Activated CD8-positive, alpha-beta T cell treated with anti-CD3 and anti-CD28 coated beads for 36 hours (primary cell): ENCODE measurements at regions of chr12 and their contacts with region 1.

Region 1: DNA sequence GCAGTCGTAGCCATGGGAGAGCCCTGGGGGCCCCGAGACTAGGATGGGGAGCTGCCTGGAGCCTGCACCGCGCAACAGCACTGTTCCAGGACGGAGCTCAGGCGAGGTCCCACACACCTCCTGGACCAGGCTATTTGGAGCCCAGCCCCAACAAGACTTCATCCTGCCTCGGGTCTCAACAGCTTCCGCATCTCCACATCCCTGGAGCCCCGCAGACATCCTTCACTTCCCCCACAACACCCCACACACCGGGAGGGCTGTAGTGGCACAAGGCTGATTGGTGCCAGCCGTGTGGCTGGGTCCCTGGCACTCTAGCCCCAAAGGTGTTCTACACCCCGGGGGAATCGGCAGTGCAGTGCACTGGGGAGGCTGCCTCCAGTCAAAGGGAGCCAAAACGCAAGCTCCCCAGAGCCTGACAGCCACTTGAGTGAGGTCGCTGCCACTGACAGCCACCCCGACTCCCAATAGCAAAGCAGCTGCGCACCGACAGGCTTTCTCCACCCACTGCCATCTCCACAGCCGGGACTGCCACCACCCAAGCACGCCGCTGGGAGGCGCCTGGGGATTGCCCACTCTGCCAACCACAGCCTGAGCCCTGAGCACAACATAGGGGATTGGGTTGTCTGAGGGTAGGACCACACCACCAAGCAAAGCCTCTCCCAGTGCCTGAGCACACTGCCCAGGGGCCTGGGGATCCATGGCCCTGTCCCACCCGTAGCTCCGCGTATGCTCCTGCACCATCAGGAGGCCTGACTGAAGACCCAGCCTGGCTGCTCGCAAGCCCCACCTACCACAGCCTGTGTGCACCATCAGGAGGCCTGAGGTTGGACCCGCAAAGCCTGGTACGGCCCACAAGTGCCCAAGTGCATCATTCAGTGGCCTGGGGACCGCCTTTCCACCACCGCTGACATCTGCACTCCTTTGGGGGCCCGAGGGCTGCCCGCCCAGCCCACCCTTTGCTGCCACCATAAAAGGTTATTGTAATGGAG is 13.2 kb upstream of the KLRF1 start:
- DNase-seq: peak; percentile 94
- ATAC-seq: peak; percentile 98
- H3K4me3 Mint-ChIP-seq: peak overlapping the region; percentile 85
- H3K27ac Mint-ChIP-seq: peak overlapping the region; percentile 55
- H3K4me1 Mint-ChIP-seq: peaks cover 14% of the 10 kb centered on the region
- H3K27me3 Mint-ChIP-seq: peaks cover 4% of the 10 kb centered on the region
- CTCF ChIP-seq: peak; percentile 94

Region 2: DNA sequence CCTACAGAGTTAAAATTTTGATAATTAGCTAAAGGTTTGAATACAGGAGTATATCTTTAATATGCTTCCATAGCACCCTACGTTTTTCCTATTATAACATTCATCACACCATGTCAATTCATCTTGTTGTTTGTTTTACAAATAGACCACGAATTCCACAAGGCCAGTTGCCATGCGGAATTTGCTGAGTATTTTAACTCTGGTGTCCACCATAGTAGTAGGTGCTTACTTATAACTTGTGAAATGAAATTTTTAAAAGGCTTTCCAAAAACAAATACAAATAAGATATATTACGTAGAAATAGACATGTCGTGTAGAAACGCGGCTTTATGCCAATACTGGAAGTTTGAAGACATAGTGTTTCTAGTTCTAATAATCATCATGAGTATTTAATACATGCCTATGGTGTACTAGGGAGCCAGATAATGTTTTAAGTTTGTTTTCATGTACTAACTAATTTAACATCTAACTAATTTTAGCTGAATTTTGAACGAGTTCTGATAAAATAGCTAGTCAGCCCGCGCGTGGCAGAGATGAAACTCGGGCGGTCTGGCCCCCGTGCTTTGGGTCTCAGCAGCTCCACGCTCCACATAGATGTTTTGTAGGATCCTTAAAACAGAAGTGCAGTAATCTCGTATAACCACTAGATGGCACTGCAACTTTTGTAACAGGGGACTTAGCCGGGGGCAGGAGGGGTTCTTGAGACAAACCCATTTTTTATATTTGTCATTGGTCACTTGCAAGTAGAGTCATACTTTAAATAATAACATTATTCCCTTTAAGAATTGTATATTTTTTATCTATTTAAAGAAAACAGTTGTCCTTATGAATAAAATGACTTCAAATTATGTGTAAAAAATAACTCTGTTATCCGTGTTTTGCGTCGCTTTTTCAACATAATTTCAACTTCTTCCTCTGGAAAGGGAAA is 63.6 kb before region 1 on chr12:
- CTCF ChIA-PET with region 1: interaction called, 219 read pairs
- POLR2A ChIA-PET with region 1: interaction called, 7 read pairs
- intact Hi-C with region 1: no loop called
- DNase-seq: peak; percentile 73
- ATAC-seq: peak; percentile 66
- H3K4me3 Mint-ChIP-seq: peak overlapping the region; percentile 67
- H3K27ac Mint-ChIP-seq: peak overlapping the region; percentile 86
- H3K4me1 Mint-ChIP-seq: peaks cover 57% of the 10 kb centered on the region
- H3K27me3 Mint-ChIP-seq: no peaks in the 10 kb centered on the region
- CTCF ChIP-seq: peak; percentile 78

Region 3: GRCh38 chr12:9829990-9830389 is 15.9 kb after region 1 on chr12:
- CTCF ChIA-PET with region 1: interaction called, 21 read pairs
- POLR2A ChIA-PET with region 1: no interaction called
- intact Hi-C with region 1: no loop called
- DNase-seq: no peak
- ATAC-seq: no peak
- H3K4me3 Mint-ChIP-seq: no peak overlapping the region
- H3K27ac Mint-ChIP-seq: no peak overlapping the region
- H3K4me1 Mint-ChIP-seq: peaks cover 2% of the 10 kb centered on the region
- H3K27me3 Mint-ChIP-seq: no peaks in the 10 kb centered on the region
- CTCF ChIP-seq: no peak

Region 4: GRCh38 chr12:9869307-9870161 is 55.4 kb after region 1 on chr12 and contains the start of gene CLEC2B:
- CTCF ChIA-PET with region 1: interaction called, 20 read pairs
- POLR2A ChIA-PET with region 1: interaction called, 6 read pairs
- intact Hi-C with region 1: loop called (anchors 5 kb)
- DNase-seq: peak; percentile 70
- ATAC-seq: peak; percentile 68
- H3K4me3 Mint-ChIP-seq: peak within 1 kb of the TSS; percentile 85
- H3K27ac Mint-ChIP-seq: peak within 1 kb of the TSS; percentile 89
- H3K4me1 Mint-ChIP-seq: peaks cover 23% of the 10 kb centered on the region
- H3K27me3 Mint-ChIP-seq: no peaks in the 10 kb centered on the region
- CTCF ChIP-seq: no peak
- total RNA-seq, gene CLEC2B: 38.4 to 43.2 TPM

Region 5: DNA sequence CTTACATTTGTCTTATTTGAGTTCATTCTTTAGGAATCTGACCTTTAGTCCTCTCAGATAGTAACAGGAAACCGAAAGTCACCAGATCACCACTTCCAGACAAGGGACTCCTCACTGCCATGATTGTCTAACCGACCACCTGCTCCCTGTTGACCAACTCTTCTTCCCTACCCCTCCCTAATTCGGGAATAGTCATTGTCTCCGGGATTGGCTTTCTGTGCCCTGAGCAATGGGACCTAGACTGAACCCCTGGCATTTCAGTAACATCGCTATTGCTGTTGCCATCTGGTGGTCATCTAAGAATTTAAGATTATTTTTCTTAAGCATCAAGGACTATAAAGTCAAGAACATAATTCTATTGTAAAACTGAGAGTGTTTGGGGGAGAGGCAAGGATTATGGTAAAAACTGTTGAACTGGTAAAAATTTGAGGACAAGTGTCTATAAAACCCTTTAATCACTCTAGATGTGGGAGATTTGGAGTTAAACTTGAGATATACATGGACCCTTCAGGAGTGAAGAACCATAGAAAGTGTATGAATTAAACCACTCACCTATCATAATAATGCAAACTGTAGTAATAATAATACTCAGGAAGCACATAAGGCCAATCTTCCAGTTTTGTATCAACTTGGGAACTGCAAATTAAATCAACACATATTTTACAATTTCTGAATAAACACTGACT is 111.7 kb after region 1 on chr12:
- CTCF ChIA-PET with region 1: interaction called, 61 read pairs
- POLR2A ChIA-PET with region 1: no interaction called
- intact Hi-C with region 1: loop called (anchors 1 kb)
- DNase-seq: peak; percentile 7
- ATAC-seq: peak; percentile 73
- H3K4me3 Mint-ChIP-seq: peak overlapping the region; percentile 59
- H3K27ac Mint-ChIP-seq: peak overlapping the region; percentile 73
- H3K4me1 Mint-ChIP-seq: peaks cover 21% of the 10 kb centered on the region
- H3K27me3 Mint-ChIP-seq: no peaks in the 10 kb centered on the region
- CTCF ChIP-seq: peak; percentile 60

Region 6: DNA sequence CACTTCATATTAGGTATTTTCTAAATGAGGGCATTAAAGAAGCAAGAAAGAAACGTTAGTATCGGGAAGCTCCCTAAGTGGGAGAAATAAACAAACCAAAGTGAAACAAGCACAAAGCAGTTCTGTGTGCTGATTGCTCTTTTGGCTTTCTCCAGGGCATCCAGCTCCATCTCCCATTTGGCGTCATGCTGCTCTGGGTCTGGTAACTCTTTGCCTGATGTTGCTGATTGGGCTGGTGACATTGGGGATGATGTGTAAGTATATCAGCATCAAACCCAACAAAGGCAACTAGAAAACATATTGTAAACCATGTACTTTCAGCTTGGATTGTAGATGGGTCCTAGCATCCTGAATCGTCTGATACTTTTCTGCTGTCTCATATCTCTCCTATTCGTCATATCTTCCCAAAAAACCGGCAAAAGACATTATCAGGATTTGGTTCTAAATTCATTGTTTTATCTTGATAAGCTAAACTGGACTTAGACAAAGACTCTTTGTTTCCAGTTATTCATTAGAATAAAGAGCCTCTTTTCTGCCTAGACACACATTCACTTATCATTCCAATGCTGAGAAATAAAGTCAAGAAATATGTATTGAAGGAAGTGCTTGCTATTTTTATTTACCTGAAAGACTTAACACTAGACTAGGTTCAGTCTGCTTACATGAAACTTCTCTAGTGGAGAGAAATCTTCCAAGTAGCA is 198.7 kb after region 1 on chr12:
- CTCF ChIA-PET with region 1: interaction called, 15 read pairs
- POLR2A ChIA-PET with region 1: no interaction called
- intact Hi-C with region 1: no loop called
- DNase-seq: no peak
- ATAC-seq: no peak
- H3K4me3 Mint-ChIP-seq: no peak overlapping the region
- H3K27ac Mint-ChIP-seq: no peak overlapping the region
- H3K4me1 Mint-ChIP-seq: no peaks in the 10 kb centered on the region
- H3K27me3 Mint-ChIP-seq: peaks cover 15% of the 10 kb centered on the region
- CTCF ChIP-seq: no peak